Endothelial cell of umbilical vein (primary cell): ENCODE measurements at regions of chr5 and their contacts with region 1.

Region 1: DNA sequence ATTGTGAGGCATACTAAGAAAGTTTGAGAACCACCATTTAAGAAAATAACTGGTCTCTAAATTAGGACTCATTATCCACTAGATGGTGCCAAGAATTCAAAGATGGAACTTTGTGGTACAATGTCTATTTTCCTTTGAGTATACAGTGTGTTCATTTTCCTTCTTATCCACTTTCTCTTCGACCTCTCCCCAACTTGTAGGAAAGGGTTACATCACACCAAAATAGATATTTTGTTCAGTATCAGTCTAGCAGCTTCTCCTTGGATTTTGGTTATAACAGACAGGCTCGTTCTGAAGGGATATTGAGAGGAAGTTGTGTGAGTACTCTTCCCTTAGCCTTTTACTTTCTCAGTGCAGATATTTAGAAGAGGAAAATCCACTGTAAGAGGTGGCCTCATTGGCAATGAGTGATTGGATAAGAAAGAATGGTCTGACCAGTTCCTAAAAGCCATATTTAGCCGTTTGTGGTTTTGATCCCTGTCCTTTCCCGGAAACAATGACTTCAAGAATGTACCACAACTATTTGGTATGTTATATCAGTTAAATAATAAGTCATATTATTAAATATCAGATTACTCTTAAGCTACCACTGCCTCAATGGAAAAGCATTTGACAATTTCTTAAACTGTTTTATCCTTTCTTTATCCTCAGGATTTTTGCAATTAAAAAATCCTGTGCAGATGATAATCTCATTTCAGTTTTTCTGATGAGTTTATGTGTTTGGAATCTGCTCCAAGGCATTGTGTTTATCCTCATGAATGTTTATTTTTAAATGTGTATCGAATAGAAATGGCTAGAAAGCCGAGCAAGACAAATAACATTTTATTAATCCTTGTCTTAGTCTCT is 69.0 kb upstream of the GRAMD2B start:
- DNase-seq: peak; percentile 74
- H3K4me3 ChIP-seq: peak overlapping the region in 1 of 3 experiments; percentile 51
- H3K27ac ChIP-seq: peak overlapping the region; percentile 81
- H3K4me1 ChIP-seq: peaks cover 36% of the 10 kb centered on the region
- H3K27me3 ChIP-seq: peaks cover 0 to 14% of the 10 kb centered on the region in 2 experiments
- CTCF ChIP-seq: peak in 1 of 2 donors; percentile 9
- POLR2A ChIP-seq: no peak

Region 2: DNA sequence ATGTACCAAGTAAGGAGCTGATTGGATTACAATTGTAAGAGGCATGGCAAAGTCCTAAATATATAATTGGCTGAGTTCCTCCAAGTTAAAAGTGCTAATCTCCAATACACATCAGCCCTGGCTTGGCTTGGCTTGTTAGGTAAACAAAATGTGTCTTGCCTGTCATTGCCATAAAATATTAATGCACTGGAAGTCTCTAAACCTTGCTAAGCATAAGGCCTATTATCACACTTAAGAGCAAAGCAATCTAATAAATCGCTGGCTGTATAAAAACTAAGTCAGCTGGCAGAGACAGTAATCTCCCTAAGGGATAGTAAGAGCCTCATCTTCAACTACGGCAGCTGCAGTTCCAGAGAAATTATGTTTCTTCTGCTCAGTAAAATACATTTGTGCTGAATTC is 349.6 kb before region 1 on chr5:
- CTCF ChIA-PET with region 1: no interaction called
- POLR2A ChIA-PET with region 1: no interaction called
- dilution Hi-C with region 1: no loop called
- intact Hi-C with region 1: no loop called
- DNase-seq: no peak
- H3K4me3 ChIP-seq: no peak overlapping the region
- H3K27ac ChIP-seq: no peak overlapping the region
- H3K4me1 ChIP-seq: no peaks in the 10 kb centered on the region
- H3K27me3 ChIP-seq: no peaks in the 10 kb centered on the region
- CTCF ChIP-seq: no peak
- POLR2A ChIP-seq: no peak

Region 3: DNA sequence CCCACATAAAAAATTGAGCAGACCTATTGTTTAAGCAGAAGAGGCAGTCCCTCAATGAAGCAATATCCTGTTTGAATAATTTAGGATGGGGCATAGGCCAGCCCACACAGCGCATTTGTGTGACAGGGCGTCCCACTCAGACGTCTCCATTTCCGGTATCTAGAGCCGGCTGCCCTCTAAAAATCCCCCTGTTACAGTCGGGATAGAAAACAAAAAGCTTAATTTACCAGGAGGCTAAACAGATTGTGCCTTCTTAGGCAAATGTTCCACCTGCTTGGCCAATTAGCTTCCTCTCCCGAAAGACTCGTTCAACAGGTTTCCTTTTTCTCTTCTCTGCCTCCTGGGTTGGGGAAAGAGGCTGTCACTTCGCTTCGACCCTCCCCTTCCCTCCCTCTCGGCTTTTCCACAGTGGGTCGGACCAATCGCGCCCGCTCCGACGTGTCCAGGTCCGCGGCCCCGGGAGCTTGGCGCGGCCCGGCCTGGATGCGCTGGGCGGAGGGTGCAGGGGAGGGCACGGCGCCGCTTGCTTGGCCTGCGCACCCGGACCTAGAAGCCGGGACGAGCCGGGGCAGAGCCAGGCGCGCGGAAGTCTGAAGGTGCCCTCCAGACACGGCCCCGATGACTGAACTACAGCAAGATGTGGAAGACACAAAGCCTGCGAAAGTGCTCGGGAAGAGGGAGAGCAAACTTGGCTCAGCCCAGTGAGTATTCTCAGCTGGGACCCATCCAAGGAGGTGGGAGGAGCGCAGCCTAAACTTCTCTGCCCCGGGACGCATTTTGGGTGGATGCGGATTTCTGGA is 69.0 kb after region 1 on chr5 and contains the start of gene GRAMD2B:
- CTCF ChIA-PET with region 1: interaction called, 3 read pairs
- POLR2A ChIA-PET with region 1: no interaction called
- dilution Hi-C with region 1: no loop called
- intact Hi-C with region 1: loop called (anchors 5 kb)
- DNase-seq: peak; percentile 82
- H3K4me3 ChIP-seq: peak within 1 kb of the TSS; percentile 14 to 83 (median 47)
- H3K27ac ChIP-seq: peak within 1 kb of the TSS; percentile 13
- H3K4me1 ChIP-seq: peaks cover 7% of the 10 kb centered on the region
- H3K27me3 ChIP-seq: peaks cover 0 to 2% of the 10 kb centered on the region in 2 experiments
- CTCF ChIP-seq: no peak
- POLR2A ChIP-seq: no peak
- total RNA-seq, gene GRAMD2B: 4.6 and 5.5 TPM in 2 replicates

Region 4: GRCh38 chr5:126499853-126500342 is 145.7 kb after region 1 on chr5:
- CTCF ChIA-PET with region 1: interaction called, 24 read pairs
- POLR2A ChIA-PET with region 1: no interaction called
- dilution Hi-C with region 1: no loop called
- intact Hi-C with region 1: loop called (anchors 2 kb)
- DNase-seq: peak; percentile 32
- H3K4me3 ChIP-seq: no peak overlapping the region
- H3K27ac ChIP-seq: no peak overlapping the region
- H3K4me1 ChIP-seq: peaks cover 4% of the 10 kb centered on the region
- H3K27me3 ChIP-seq: peaks cover 15 to 22% of the 10 kb centered on the region in 2 experiments
- CTCF ChIP-seq: peak; percentile 41 to 57
- POLR2A ChIP-seq: no peak

Region 5: GRCh38 chr5:126538579-126538978 is 184.3 kb after region 1 on chr5:
- CTCF ChIA-PET with region 1: interaction called, 128 read pairs
- POLR2A ChIA-PET with region 1: no interaction called
- dilution Hi-C with region 1: loop called (anchors 25 kb)
- intact Hi-C with region 1: loop called (anchors 1 kb)
- DNase-seq: no peak
- H3K4me3 ChIP-seq: no peak overlapping the region
- H3K27ac ChIP-seq: no peak overlapping the region
- H3K4me1 ChIP-seq: no peaks in the 10 kb centered on the region
- H3K27me3 ChIP-seq: no peaks in the 10 kb centered on the region
- CTCF ChIP-seq: no peak
- POLR2A ChIP-seq: no peak

Region 6: DNA sequence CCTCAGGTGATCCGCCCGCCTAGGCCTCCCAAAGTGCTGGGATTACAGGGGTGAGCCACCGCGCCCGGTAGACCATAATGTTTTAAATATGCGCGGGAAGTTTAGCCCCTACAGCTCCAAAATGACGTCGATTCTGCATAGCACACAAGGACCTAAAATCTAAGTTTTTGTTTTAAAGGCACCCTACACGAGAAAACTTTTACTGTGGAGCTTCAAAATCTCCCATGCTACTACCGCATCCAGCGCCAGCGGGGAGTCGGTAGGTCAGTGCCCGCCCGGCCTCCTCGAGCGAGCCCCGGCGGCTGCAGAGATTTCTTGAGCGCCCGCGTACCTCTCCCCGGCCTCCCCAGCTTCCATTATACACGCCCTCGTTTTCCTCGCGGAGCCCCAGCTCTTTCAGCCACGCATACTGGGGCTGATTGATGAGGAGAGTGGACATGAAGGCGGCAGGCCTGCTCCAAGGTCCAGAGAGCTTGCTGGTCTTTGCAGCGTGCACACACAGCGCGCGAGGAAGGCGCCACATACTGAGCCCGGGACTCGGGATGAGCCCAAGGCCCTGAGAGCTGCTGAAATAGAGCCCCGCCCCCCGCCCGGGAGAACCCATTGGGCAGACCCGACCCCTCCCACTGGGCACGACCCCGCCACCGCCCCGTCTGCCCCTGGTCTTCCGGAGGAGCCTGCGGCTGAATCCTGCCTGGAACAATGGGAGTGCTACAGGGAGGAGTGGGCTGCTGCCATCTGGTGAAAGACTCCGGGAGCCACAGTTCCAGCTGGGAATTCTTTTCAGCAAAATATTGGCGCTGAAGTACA is 240.6 kb after region 1 on chr5 and contains the start of gene ALDH7A1:
- CTCF ChIA-PET with region 1: interaction called, 15 read pairs
- POLR2A ChIA-PET with region 1: no interaction called
- dilution Hi-C with region 1: no loop called
- intact Hi-C with region 1: loop called (anchors 1 kb)
- DNase-seq: peak; percentile 96
- H3K4me3 ChIP-seq: peak within 1 kb of the TSS; percentile 49 to 60 (median 58)
- H3K27ac ChIP-seq: peak within 1 kb of the TSS; percentile 68
- H3K4me1 ChIP-seq: peaks cover 27% of the 10 kb centered on the region
- H3K27me3 ChIP-seq: no peaks in the 10 kb centered on the region
- CTCF ChIP-seq: peak; percentile 58 to 65
- POLR2A ChIP-seq: peak; percentile 94
- total RNA-seq, gene ALDH7A1: 75.7 and 103 TPM in 2 replicates

Region 7: GRCh38 chr5:126808521-126808988 is 454.3 kb after region 1 on chr5:
- CTCF ChIA-PET with region 1: interaction called, 4 read pairs
- POLR2A ChIA-PET with region 1: no interaction called
- dilution Hi-C with region 1: no loop called
- intact Hi-C with region 1: loop called (anchors 5 kb)
- DNase-seq: peak; percentile 53
- H3K4me3 ChIP-seq: no peak overlapping the region
- H3K27ac ChIP-seq: no peak overlapping the region
- H3K4me1 ChIP-seq: peaks cover 39% of the 10 kb centered on the region
- H3K27me3 ChIP-seq: no peaks in the 10 kb centered on the region
- CTCF ChIP-seq: peak; percentile 13 to 40
- POLR2A ChIP-seq: no peak